ENCODE measurements at regions of chr4 and their contacts with region 1.

Region 1: GRCh38 chr4:98260579-98261290 is 449 bp upstream of the RAP1GDS1 start:
- DNase-seq: peak; percentile 89
- H3K4me3 Mint-ChIP-seq: peak overlapping the region; percentile 96
- H3K27ac Mint-ChIP-seq: peak overlapping the region; percentile 97
- H3K4me1 Mint-ChIP-seq: peaks cover 55% of the 10 kb centered on the region
- H3K27me3 Mint-ChIP-seq: no peaks in the 10 kb centered on the region

Region 2: GRCh38 chr4:98275145-98275544 is 14.4 kb after region 1 on chr4:
- intact Hi-C with region 1: loop called (anchors 1 kb)
- DNase-seq: no peak
- H3K4me3 Mint-ChIP-seq: no peak overlapping the region
- H3K27ac Mint-ChIP-seq: no peak overlapping the region
- H3K4me1 Mint-ChIP-seq: peaks cover 20% of the 10 kb centered on the region
- H3K27me3 Mint-ChIP-seq: no peaks in the 10 kb centered on the region

Region 3: DNA sequence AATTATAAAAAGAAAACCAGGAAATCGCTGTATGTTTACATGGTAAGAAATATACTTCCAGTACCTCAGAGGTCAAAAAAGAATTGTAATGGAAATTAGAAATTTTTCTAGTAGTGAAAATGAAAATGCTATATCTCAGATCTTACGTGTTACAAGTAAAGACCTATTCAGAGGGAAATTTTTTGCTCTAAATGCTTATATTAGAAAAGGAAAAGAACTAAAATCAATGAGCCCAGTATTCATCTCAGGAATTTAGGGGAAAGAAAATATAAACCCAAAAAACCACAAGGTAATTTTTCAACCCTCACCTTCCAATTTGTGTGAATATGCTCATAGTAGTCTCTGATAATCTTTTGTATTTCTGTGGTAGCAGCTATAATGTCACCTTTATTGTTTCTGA is 146.1 kb after region 1 on chr4:
- intact Hi-C with region 1: loop called (anchors 2 kb)
- DNase-seq: no peak
- H3K4me3 Mint-ChIP-seq: no peak overlapping the region
- H3K27ac Mint-ChIP-seq: no peak overlapping the region
- H3K4me1 Mint-ChIP-seq: peaks cover 25% of the 10 kb centered on the region
- H3K27me3 Mint-ChIP-seq: no peaks in the 10 kb centered on the region

Region 4: DNA sequence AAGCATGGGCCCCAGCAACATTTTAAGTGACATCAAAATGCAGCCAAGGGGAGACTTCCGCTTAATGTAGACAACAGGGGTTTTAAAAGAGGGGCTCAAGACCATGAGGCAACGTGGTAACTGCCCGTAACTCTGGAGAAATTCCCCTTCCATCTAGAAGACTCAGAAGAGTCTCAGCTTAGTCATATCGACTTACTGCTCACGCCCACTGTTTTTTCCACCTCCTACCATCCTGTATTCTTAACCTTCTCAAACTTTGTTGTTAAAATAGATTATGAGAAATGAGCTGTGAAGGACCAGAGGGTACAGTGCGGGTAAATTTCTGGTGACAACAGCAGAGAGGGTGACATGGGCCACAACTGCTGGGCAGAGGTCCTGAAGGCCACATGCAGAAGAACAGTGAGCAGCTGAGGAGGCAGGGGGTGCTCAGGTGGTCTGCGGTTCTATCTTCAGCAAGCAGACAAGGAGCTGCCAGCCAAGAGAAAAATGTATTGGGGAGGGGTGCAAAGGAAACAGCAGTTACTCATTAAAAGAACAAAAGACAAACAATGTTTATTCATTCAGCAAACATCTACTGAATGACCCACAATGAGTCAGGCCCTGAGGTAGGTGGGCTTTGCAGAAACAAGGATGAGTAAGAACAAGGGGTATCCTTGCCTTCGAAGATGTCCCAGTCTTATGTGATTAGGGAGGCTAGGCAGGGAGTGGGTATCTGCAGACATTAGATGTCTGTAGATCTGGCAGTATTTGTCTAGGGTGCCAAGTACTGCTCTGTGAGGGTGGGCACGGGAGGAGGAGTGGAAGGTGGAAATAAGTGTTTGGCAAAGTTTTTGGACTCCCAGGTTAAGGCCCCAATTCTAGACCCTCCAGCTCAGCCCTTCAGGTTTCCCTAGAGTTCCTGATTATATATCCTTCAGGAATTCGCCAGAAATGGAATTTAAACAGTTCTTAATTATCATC is 222.4 kb after region 1 on chr4:
- intact Hi-C with region 1: loop called (anchors 1 kb)
- DNase-seq: peak; percentile 40
- H3K4me3 Mint-ChIP-seq: peak overlapping the region; percentile 72
- H3K27ac Mint-ChIP-seq: peak overlapping the region; percentile 98
- H3K4me1 Mint-ChIP-seq: peaks cover 92% of the 10 kb centered on the region
- H3K27me3 Mint-ChIP-seq: no peaks in the 10 kb centered on the region

Region 5: DNA sequence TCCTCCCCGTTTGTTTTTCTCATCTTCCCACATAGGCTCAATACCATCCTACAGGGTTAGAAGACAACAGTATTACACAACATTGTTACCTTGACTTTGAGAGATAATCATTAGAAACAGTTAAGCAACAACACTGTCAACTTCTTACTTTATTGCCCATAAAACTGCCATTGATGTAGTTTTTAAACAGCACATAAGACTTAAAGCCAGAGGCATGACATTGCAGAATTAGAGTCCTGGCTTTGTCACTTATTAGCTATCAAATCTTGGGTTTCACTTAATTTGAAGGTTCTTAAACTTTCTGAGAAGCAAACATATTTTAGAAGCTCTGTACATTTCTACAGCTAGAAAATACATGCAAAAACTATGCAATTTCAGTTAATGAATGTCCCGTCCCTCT is 626.4 kb after region 1 on chr4:
- intact Hi-C with region 1: no loop called
- DNase-seq: no peak
- H3K4me3 Mint-ChIP-seq: no peak overlapping the region
- H3K27ac Mint-ChIP-seq: no peak overlapping the region
- H3K4me1 Mint-ChIP-seq: peaks cover 13% of the 10 kb centered on the region
- H3K27me3 Mint-ChIP-seq: no peaks in the 10 kb centered on the region

Region 6: DNA sequence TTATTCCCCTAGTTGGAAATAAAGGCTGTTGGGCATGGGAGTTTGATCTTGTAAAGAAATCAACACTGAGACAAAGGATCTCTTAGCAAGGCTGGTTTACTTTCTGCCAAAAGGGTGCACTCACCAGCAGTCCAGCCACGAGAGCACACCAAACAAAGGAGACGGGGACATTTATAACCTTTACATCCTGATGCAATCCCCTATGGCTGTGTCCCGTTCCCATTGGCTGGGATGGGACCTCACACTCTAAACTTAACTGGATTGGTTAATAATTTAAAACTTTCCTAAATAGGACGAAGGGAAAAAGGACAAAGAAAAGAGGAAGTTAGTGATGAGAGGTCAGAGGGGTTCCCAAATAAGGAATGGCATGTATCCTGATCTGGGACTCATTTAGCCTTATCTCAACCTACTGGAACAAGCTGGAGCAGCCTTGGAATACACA is 752.7 kb after region 1 on chr4:
- intact Hi-C with region 1: no loop called
- DNase-seq: no peak
- H3K4me3 Mint-ChIP-seq: no peak overlapping the region
- H3K27ac Mint-ChIP-seq: no peak overlapping the region
- H3K4me1 Mint-ChIP-seq: no peaks in the 10 kb centered on the region
- H3K27me3 Mint-ChIP-seq: no peaks in the 10 kb centered on the region

Region 7: DNA sequence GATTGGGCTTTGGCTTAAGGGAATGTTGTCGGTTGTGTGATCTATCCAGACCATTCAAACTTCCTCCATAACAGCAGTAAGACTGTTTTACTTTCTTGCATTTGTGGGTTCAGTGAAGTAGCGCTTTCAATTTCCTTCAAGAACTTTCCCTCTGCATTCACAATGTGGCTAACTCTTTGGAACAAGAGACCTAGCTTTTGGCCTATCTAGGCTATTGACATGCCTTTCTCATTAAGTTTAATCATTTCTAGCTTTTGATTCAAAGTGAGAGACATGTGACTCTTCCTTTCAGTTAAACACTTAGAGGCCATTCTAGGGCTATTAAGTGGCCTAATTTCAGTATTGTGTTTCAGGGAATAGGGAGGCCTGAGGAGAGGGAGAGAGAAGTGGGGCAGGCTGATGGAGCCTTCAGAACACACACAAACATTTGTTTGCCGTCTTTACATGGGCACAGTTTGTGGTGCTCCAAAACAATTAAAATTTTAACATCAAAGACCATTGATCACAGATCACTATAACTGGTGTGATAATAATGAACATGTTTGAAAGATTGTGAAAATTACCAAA is 793.8 kb after region 1 on chr4:
- intact Hi-C with region 1: loop called (anchors 2 kb)
- DNase-seq: no peak
- H3K4me3 Mint-ChIP-seq: no peak overlapping the region
- H3K27ac Mint-ChIP-seq: peak overlapping the region; percentile 7
- H3K4me1 Mint-ChIP-seq: peaks cover 49% of the 10 kb centered on the region
- H3K27me3 Mint-ChIP-seq: no peaks in the 10 kb centered on the region

Region 8: GRCh38 chr4:99563310-99564186 is 1302.8 kb after region 1 on chr4 and contains the start of gene TRMT10A:
- intact Hi-C with region 1: loop called (anchors 2 kb)
- DNase-seq: peak; percentile 92
- H3K4me3 Mint-ChIP-seq: peak within 1 kb of the TSS; percentile 89
- H3K27ac Mint-ChIP-seq: peak within 1 kb of the TSS; percentile 96
- H3K4me1 Mint-ChIP-seq: peaks cover 25% of the 10 kb centered on the region
- H3K27me3 Mint-ChIP-seq: peaks cover 11% of the 10 kb centered on the region
- total RNA-seq, gene TRMT10A: 7.3 TPM in 2 replicates